ENCODE measurements at regions of chr11 and their contacts with region 1.

Region 1: DNA sequence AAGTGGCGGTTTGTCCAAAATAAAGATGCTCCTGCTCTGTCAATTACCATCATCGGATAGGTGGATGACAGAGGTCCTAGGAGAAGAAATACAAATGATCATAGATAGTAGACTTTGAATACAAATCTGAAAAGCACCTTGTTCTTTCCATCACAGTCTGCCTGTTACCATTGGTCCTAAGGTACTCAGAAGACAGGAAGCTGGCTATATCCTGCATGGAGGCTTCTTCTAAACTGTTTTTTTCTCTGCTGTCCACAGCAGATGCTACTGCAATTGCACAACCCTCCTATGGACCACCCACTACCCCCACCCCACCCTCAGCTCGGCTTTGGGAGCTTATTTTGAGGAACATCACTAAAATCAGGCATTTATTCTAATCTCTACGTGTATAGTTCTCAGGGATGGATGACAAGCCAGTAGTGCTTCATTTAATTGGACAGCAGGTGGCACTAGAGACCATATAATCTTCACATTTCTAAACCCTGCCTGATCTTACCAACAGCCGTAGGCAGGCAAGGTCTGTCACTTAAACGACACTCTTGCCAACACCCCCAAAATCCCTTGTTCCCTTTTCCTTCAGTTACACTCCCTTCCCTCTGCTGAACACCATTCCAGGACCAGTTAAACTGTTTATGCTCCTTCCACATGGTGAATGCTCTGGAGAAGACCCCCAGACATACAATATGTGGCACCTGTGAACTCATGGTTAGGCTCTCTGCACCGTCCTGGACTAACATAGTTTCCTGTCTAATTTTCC is 6.6 kb upstream of the PTS start:
- DNase-seq: peak; percentile 26
- H3K4me3 Mint-ChIP-seq: no peak overlapping the region
- H3K27ac Mint-ChIP-seq: no peak overlapping the region
- H3K4me1 Mint-ChIP-seq: peaks cover 13% of the 10 kb centered on the region
- H3K27me3 Mint-ChIP-seq: peaks cover 2% of the 10 kb centered on the region

Region 2: DNA sequence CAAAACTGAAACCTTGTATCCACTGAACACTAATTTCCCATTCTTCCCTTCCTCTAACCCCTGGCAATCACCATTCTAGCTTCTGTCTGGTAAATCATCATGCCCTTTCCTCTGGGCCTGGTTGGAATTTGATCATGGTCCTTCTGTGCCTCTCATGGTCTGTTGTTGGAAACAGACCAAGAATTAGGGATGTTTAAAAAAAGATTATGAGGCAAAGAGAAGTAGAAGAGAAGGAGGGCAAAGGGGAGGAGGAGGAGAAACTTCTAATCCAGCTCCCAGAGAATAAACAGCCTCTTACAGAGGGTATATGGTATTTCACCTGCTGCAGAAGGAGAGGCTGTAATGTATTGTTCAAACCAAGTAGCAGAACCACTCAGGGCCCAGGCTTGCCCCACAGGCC is 33.8 kb before region 1 on chr11:
- intact Hi-C with region 1: no loop called
- DNase-seq: no peak
- H3K4me3 Mint-ChIP-seq: no peak overlapping the region
- H3K27ac Mint-ChIP-seq: no peak overlapping the region
- H3K4me1 Mint-ChIP-seq: no peaks in the 10 kb centered on the region
- H3K27me3 Mint-ChIP-seq: peaks cover 10% of the 10 kb centered on the region

Region 3: GRCh38 chr11:112280268-112281126 is 60.8 kb after region 1 on chr11:
- intact Hi-C with region 1: loop called (anchors 1 kb)
- DNase-seq: peak; percentile 60
- H3K4me3 Mint-ChIP-seq: peak overlapping the region; percentile 85
- H3K27ac Mint-ChIP-seq: peak overlapping the region; percentile 59
- H3K4me1 Mint-ChIP-seq: peaks cover 25% of the 10 kb centered on the region
- H3K27me3 Mint-ChIP-seq: no peaks in the 10 kb centered on the region

Region 4: GRCh38 chr11:112555491-112556364 is 336.1 kb after region 1 on chr11:
- intact Hi-C with region 1: loop called (anchors 1 kb)
- DNase-seq: peak; percentile 49
- H3K4me3 Mint-ChIP-seq: no peak overlapping the region
- H3K27ac Mint-ChIP-seq: no peak overlapping the region
- H3K4me1 Mint-ChIP-seq: no peaks in the 10 kb centered on the region
- H3K27me3 Mint-ChIP-seq: peaks cover 7% of the 10 kb centered on the region

Region 5: DNA sequence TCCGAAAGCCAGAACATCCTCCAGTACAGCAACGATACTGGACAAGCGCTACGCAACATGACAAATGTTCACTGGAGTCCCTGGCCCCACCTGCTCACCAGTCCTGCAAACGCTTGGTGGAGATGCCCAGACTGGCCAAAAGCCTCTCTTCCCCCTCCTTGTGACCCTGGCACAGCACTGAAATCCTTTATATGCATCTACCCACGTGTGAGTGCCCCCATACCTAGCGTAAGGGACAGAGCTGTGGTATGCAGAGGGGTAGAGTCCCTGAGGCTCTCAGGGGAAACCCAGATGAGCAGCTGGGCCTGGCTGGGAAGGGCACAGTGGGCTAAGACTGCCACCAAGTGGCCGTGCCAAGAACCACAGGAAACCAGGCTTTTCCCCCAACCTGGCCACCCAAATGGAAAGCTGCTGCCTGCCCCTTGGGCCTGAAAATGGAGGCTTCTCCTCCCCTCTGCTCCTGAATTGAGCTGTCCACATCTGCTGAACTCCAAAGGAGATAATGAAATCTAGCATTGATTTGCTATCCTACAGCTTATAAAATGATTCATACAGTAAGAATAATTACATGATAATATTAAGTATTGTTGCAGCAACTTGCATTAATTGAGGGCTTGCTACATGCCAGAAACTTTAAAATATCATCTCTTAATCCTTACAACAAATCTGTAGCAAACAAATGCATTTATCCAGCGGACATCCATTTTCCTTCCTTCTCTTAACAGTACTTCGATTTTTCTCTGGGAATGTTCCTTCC is 1070.0 kb after region 1 on chr11:
- intact Hi-C with region 1: loop called (anchors 10 kb)
- DNase-seq: peak; percentile 54
- H3K4me3 Mint-ChIP-seq: no peak overlapping the region
- H3K27ac Mint-ChIP-seq: no peak overlapping the region
- H3K4me1 Mint-ChIP-seq: no peaks in the 10 kb centered on the region
- H3K27me3 Mint-ChIP-seq: no peaks in the 10 kb centered on the region

Region 6: DNA sequence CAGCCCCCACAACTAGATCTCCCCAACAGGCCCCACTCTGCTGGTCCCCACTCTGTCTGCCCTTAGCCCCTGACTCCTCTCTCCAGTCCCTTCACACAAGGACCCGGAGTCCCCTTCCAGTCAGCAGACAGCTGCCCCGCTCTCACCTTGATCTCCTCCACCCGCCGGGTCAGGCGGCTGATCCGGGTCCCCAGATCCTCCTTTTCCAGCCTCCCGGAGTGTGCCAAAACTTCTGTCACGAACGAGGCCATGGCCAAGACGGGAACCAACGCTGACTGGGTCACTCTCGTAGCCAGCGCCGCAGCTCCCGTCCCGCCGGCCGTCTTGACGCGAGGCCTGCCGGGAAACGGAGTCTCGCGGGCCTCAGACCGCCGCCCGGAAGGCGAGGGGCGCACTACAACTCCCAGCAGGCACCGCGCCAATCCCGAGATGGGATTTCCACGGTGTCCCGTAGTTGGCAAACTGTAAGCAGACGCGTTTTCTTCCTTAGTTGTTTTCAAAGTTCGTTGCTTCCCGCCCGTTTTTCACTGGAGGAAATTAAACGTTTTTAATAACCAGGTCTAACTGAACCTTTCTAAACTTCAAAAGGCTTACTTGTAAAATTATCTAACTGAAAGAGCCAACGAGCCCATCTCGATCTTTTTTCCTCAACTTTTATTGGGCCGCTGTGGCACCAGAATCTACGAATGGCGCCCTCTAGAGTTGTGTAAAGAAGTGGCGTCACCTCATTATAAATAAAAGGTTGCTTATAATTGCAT is 1553.9 kb after region 1 on chr11 and contains the start of gene ZW10:
- intact Hi-C with region 1: loop called (anchors 10 kb)
- DNase-seq: peak; percentile 90
- H3K4me3 Mint-ChIP-seq: peak within 1 kb of the TSS; percentile 98
- H3K27ac Mint-ChIP-seq: peak within 1 kb of the TSS; percentile 98
- H3K4me1 Mint-ChIP-seq: peaks cover 22% of the 10 kb centered on the region
- H3K27me3 Mint-ChIP-seq: peaks cover 12% of the 10 kb centered on the region
- total RNA-seq, gene ZW10: 24.4 TPM in 2 replicates

Measured in activated T-helper 2 cell treated with anti-CD3 and anti-CD28 coated beads, Interferon-gamma antibody, Interleukin-2, Interleukin-4, amounts not matched to agents 10 μg/mL and 5 μg/mL and 100 μg/mL, durations not matched to agents 14 hours and 24 hours and 36 hours (primary cell).